Activated CD4-positive, alpha-beta memory T cell treated with anti-CD3 and anti-CD28 coated beads for 36 hours (primary cell): ENCODE measurements at regions of chrX and their contacts with region 1.

Region 1: GRCh38 chrX:120468825-120469525 is at the start of gene LAMP2:
- DNase-seq: peak; percentile 90
- H3K4me3 Mint-ChIP-seq: peak within 1 kb of the TSS; percentile 82
- H3K27ac Mint-ChIP-seq: peak within 1 kb of the TSS; percentile 83
- H3K4me1 Mint-ChIP-seq: peaks cover 16% of the 10 kb centered on the region
- H3K27me3 Mint-ChIP-seq: no peaks in the 10 kb centered on the region
- total RNA-seq, gene LAMP2: 38.5 to 38.7 TPM

Region 2: DNA sequence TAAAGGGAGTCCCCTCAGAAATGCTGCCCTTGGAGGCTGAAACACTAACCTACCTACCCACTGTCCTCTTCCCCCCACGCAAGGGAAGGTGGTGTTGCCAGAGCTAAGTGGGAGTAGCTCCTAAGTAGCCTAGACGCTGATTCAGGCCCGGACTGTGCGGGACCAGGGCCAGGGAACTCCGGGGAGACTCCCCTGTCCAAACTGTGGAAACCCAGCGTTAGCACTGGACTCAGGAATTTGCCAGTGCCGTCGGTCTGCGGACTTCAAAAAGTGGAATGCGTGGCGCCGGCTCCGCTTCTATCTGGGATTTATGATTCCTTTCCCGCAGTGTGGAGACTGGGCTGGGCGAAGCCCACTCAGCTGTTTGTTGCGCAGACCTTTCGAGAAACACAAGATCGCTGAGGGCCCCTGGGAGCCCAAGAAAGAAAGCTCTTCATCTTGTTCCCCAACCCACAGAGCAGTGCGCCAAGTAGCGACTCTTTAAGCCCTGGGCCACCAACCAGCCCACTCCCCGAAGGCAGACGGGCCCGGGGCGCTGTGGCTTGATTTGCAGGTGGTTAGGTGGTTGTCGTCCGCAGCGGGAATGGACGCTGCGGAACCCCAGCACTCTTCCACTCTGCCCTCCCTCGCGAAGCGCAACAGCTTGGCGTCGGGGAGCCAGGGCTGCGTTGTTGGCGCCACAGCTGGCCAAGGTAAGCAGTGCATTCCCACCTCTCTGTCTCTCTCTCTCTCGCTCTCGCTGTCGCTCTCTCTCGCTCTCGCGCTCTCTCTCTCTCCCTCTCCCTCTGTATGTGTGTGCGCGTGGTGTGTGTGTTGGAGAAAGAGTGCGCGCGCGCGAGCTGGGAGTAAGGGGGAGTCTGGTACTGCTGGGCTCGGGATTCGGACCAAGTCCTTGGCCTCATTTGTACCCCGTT is 159.8 kb before region 1 on chrX:
- CTCF ChIA-PET with region 1: interaction called, 3 read pairs
- POLR2A ChIA-PET with region 1: no interaction called
- intact Hi-C with region 1: loop called (anchors 2 kb)
- DNase-seq: peak; percentile 82
- H3K4me3 Mint-ChIP-seq: peak overlapping the region; percentile 71
- H3K27ac Mint-ChIP-seq: peak overlapping the region; percentile 46
- H3K4me1 Mint-ChIP-seq: peaks cover 10% of the 10 kb centered on the region
- H3K27me3 Mint-ChIP-seq: peaks cover 11% of the 10 kb centered on the region

Region 3: GRCh38 chrX:120428309-120428708 is 40.7 kb before region 1 on chrX:
- CTCF ChIA-PET with region 1: no interaction called
- POLR2A ChIA-PET with region 1: no interaction called
- intact Hi-C with region 1: no loop called
- DNase-seq: no peak
- H3K4me3 Mint-ChIP-seq: no peak overlapping the region
- H3K27ac Mint-ChIP-seq: no peak overlapping the region
- H3K4me1 Mint-ChIP-seq: peaks cover 13% of the 10 kb centered on the region
- H3K27me3 Mint-ChIP-seq: no peaks in the 10 kb centered on the region

Region 4: GRCh38 chrX:120457766-120458180 is 11.2 kb before region 1 on chrX:
- CTCF ChIA-PET with region 1: no interaction called
- POLR2A ChIA-PET with region 1: no interaction called
- intact Hi-C with region 1: loop called (anchors 1 kb)
- DNase-seq: peak; percentile 14
- H3K4me3 Mint-ChIP-seq: no peak overlapping the region
- H3K27ac Mint-ChIP-seq: no peak overlapping the region
- H3K4me1 Mint-ChIP-seq: peaks cover 33% of the 10 kb centered on the region
- H3K27me3 Mint-ChIP-seq: no peaks in the 10 kb centered on the region

Region 5: GRCh38 chrX:120485638-120486520 is 16.9 kb after region 1 on chrX:
- CTCF ChIA-PET with region 1: interaction called, 4 read pairs
- POLR2A ChIA-PET with region 1: interaction called, 4 read pairs
- intact Hi-C with region 1: loop called (anchors 1 kb)
- DNase-seq: peak; percentile 69
- H3K4me3 Mint-ChIP-seq: peak overlapping the region; percentile 69
- H3K27ac Mint-ChIP-seq: peak overlapping the region; percentile 86
- H3K4me1 Mint-ChIP-seq: peaks cover 26% of the 10 kb centered on the region
- H3K27me3 Mint-ChIP-seq: no peaks in the 10 kb centered on the region